Lower leg skin (tissue), 4 donors: ENCODE measurements at regions of chr1 and their contacts with region 1.

Region 1: DNA sequence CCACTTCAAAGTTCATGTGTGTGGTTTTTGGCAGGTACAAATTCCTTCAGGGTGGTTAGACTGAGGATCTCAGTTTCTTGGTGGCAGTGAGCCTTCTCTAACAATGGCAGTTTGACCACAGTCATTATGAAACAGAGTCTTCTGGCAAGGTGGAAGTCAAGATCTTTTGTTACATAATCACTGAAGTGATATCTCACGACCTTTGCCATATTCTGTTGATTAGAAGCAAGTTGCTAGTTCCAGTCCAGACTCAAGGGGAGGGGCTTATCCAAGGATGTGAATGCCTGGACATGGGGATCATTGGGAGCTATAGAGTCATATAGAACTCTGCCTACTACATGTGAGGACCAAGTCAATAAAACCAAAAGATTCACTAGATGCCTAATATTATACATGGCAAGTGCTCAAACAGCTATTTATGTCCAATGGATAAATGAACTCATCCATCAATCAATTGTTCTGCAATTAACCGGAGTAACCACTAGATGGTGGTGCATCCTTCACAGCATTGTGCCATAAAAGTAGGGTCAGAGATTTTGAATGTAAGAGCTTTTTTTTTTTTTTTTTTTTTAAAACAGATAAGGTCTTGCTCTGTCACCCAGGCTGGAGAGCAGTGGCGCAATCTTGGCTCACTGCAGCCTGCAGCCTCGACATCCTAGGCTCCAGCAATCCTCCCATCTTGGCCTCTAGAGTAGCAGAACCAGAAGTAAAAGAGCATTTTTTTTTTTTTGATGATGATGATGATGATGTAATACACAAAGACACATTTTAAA is 131.9 kb downstream of the CRB1 start:
- DNase-seq: no peak
- H3K4me3 ChIP-seq: no peak overlapping the region
- CTCF ChIP-seq: no peak
- POLR2A ChIP-seq: no peak

Region 2: DNA sequence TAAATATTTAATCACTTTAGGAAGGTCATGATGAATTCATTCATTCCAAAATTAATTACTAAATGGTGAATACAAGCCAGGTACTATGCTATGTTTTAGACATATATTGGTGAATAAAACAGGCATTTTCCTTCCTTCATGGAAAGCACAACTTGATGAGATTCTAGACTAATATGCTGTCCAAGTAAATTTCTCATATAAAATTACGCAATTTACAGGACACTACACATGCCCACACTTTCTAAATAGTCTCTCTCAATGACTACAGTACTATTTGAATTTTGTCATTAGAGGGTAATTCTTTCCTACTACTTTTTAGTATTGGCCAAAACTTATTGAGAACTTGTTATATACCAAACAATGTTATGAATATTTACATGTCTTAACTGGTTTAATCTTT is 18.8 kb after region 1 on chr1:
- intact Hi-C with region 1: loop called (anchors 2 kb)
- DNase-seq: no peak
- H3K4me3 ChIP-seq: no peak overlapping the region
- CTCF ChIP-seq: no peak
- POLR2A ChIP-seq: no peak

Region 3: GRCh38 chr1:198741744-198742143 is 1341.8 kb after region 1 on chr1:
- intact Hi-C with region 1: no loop called
- DNase-seq: no peak
- H3K4me3 ChIP-seq: no peak overlapping the region
- CTCF ChIP-seq: no peak
- POLR2A ChIP-seq: no peak